ENCODE measurements at regions of chr10 and their contacts with region 1.

Region 1: GRCh38 chr10:22655311-22655981 is 58.9 kb downstream of the PIP4K2A start:
- DNase-seq: peak; percentile 55
- ATAC-seq: peak; percentile 21
- H3K4me3 Mint-ChIP-seq: peak overlapping the region; percentile 49
- H3K27ac Mint-ChIP-seq: peak overlapping the region; percentile 99
- H3K4me1 Mint-ChIP-seq: peaks cover 96% of the 10 kb centered on the region
- H3K27me3 Mint-ChIP-seq: no peaks in the 10 kb centered on the region
- CTCF ChIP-seq: no peak

Region 2: DNA sequence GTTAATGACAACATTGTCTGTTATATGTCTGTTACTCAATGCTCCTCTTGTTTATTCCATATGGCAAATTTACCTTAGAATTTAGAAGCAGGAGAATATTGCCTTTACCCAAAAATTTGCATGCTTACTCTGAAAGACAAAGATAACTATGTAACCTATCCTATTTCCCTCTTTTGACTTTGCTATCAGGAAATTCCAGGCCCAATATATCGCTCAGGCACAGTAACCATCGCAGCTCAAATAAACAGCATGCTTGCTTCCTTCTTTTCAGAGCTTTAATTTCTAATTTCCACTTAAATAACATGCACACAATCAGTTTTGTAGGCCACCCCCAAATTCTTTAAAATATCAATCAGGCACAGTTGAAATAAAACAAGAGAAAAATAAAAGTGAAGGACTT is 495.5 kb before region 1 on chr10:
- CTCF ChIA-PET with region 1: no interaction called
- POLR2A ChIA-PET with region 1: no interaction called
- intact Hi-C with region 1: no loop called
- DNase-seq: no peak
- ATAC-seq: no peak
- H3K4me3 Mint-ChIP-seq: no peak overlapping the region
- H3K27ac Mint-ChIP-seq: no peak overlapping the region
- H3K4me1 Mint-ChIP-seq: peaks cover 9% of the 10 kb centered on the region
- H3K27me3 Mint-ChIP-seq: no peaks in the 10 kb centered on the region
- CTCF ChIP-seq: no peak

Region 3: GRCh38 chr10:22560913-22561239 is 94.6 kb before region 1 on chr10:
- CTCF ChIA-PET with region 1: no interaction called
- POLR2A ChIA-PET with region 1: no interaction called
- intact Hi-C with region 1: no loop called
- DNase-seq: no peak
- ATAC-seq: no peak
- H3K4me3 Mint-ChIP-seq: no peak overlapping the region
- H3K27ac Mint-ChIP-seq: no peak overlapping the region
- H3K4me1 Mint-ChIP-seq: peaks cover 20% of the 10 kb centered on the region
- H3K27me3 Mint-ChIP-seq: no peaks in the 10 kb centered on the region
- CTCF ChIP-seq: no peak

Region 4: GRCh38 chr10:22573820-22574569 is 81.5 kb before region 1 on chr10:
- CTCF ChIA-PET with region 1: interaction called, 14 read pairs
- POLR2A ChIA-PET with region 1: no interaction called
- intact Hi-C with region 1: no loop called
- DNase-seq: peak; percentile 56
- ATAC-seq: peak; percentile 35
- H3K4me3 Mint-ChIP-seq: peak overlapping the region; percentile 42
- H3K27ac Mint-ChIP-seq: peak overlapping the region; percentile 86
- H3K4me1 Mint-ChIP-seq: peaks cover 66% of the 10 kb centered on the region
- H3K27me3 Mint-ChIP-seq: no peaks in the 10 kb centered on the region
- CTCF ChIP-seq: peak; percentile 68

Region 5: DNA sequence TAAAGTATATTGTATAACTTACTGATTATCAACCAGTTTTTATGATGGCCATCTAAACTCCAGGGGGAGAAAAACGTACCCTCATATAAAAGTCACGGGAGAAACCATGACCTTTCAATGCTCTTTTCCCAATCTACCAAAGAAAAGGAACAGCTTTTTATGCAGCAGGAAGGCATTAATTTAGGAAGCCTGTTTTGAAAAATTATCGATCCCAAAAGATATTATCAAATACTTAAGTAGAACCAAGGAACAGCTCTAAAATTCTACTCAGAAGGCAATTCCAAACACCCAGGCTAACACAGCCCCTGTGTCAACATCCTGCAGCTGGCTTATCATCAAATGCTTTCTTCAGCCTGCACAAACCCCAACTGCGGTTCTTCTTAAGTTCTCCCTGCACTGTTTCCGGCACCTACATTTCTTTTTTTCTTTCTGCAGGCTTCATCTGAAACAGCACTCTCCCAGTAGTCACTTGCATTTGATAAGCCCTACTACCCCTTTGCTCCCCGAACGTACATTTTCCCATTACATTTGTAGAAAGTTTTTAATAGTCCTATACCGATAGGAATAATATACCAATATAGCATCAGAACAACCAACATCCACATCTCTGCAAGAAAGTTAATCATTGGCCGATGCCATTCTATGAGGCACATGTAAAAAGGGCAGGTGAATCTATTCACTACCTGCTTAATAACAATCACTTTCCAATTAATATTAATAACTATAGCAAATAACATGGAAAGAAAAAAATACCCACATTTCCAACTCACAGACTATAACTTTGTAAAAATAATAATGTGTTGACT is 11.0 kb after region 1 on chr10:
- CTCF ChIA-PET with region 1: interaction called, 13 read pairs
- POLR2A ChIA-PET with region 1: interaction called, 4 read pairs
- intact Hi-C with region 1: no loop called
- DNase-seq: peak; percentile 80
- ATAC-seq: peak; percentile 79
- H3K4me3 Mint-ChIP-seq: peak overlapping the region; percentile 81
- H3K27ac Mint-ChIP-seq: peak overlapping the region; percentile 93
- H3K4me1 Mint-ChIP-seq: peaks cover 89% of the 10 kb centered on the region
- H3K27me3 Mint-ChIP-seq: no peaks in the 10 kb centered on the region
- CTCF ChIP-seq: no peak

Region 6: GRCh38 chr10:22682237-22683139 is 27.0 kb after region 1 on chr10:
- CTCF ChIA-PET with region 1: interaction called, 22 read pairs
- POLR2A ChIA-PET with region 1: interaction called, 35 read pairs
- intact Hi-C with region 1: no loop called
- DNase-seq: peak; percentile 85
- ATAC-seq: peak; percentile 42
- H3K4me3 Mint-ChIP-seq: peak overlapping the region; percentile 59
- H3K27ac Mint-ChIP-seq: peak overlapping the region; percentile 100
- H3K4me1 Mint-ChIP-seq: peaks cover 88% of the 10 kb centered on the region
- H3K27me3 Mint-ChIP-seq: no peaks in the 10 kb centered on the region
- CTCF ChIP-seq: no peak

Region 7: GRCh38 chr10:22714479-22715289 is 59.2 kb after region 1 on chr10 and contains the start of gene PIP4K2A:
- CTCF ChIA-PET with region 1: interaction called, 15 read pairs
- POLR2A ChIA-PET with region 1: interaction called, 28 read pairs
- intact Hi-C with region 1: no loop called
- DNase-seq: peak; percentile 75
- ATAC-seq: peak; percentile 82
- H3K4me3 Mint-ChIP-seq: peak within 1 kb of the TSS; percentile 92
- H3K27ac Mint-ChIP-seq: peak within 1 kb of the TSS; percentile 90
- H3K4me1 Mint-ChIP-seq: peaks cover 23% of the 10 kb centered on the region
- H3K27me3 Mint-ChIP-seq: no peaks in the 10 kb centered on the region
- CTCF ChIP-seq: no peak
- total RNA-seq, gene PIP4K2A: 108 to 115 TPM

Region 8: GRCh38 chr10:22791655-22792054 is 136.2 kb after region 1 on chr10:
- CTCF ChIA-PET with region 1: no interaction called
- POLR2A ChIA-PET with region 1: no interaction called
- intact Hi-C with region 1: no loop called
- DNase-seq: no peak
- ATAC-seq: no peak
- H3K4me3 Mint-ChIP-seq: no peak overlapping the region
- H3K27ac Mint-ChIP-seq: no peak overlapping the region
- H3K4me1 Mint-ChIP-seq: no peaks in the 10 kb centered on the region
- H3K27me3 Mint-ChIP-seq: no peaks in the 10 kb centered on the region
- CTCF ChIP-seq: no peak

Measured in activated CD8-positive, alpha-beta T cell treated with anti-CD3 and anti-CD28 coated beads for 36 hours (primary cell).